IMR-90 (cell line): ENCODE measurements at regions of chr7 and their contacts with region 1.

Region 1: DNA sequence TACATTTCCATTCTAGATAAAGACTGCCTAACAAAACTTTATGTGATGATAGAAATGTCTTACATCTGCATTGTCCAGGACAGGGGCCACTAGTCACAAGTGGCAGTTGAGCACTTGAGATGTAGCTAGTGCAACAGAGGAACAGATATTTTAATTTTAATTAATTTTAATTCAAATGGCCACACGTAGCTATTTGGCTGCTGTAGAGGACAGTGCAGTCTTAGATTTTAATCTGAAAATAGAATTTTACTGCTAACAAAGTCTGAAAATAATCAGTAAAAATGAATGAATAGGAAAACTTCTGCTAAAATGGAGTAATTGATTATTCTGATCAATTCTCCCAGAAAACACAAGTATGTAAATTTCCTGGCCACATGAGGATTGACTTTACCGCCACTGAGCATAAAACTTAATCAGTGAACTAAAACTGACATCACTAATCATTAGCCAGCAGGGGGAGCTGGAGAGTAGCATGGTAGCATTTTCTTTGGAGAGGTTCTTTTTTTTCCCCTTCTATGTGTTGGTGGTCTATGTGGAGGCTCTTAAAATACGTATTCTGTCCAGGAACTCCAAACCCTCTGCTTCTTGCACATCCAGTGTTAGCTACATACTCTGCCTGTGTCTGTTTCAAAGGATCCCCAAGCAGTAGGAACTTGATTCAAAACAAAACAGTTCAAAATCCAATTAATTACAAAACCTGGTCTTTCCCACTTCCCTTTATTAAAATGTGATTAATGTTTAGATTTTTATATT is 52.1 kb downstream of the TSPAN12 start:
- DNase-seq: peak; percentile 61
- ATAC-seq: peak; percentile 85
- H3K4me3 ChIP-seq: no peak overlapping the region
- H3K27ac ChIP-seq: no peak overlapping the region
- H3K4me1 ChIP-seq: 0 out of 2 replicates have a peak, but pooled peaks cover 2% of the 10 kb centered on the region
- H3K27me3 ChIP-seq: no peaks in the 10 kb centered on the region
- CTCF ChIP-seq: peak; percentile 74
- POLR2A ChIP-seq: no peak
- RAD21 ChIP-seq: peak; percentile 70

Region 2: GRCh38 chr7:120760050-120760449 is 45.8 kb before region 1 on chr7:
- CTCF ChIA-PET with region 1: no interaction called
- POLR2A ChIA-PET with region 1: no interaction called
- dilution Hi-C with region 1: no loop called
- in situ Hi-C with region 1: no loop called
- intact Hi-C with region 1: no loop called
- DNase-seq: no peak
- ATAC-seq: no peak
- H3K4me3 ChIP-seq: no peak overlapping the region
- H3K27ac ChIP-seq: no peak overlapping the region
- H3K4me1 ChIP-seq: no peaks in the 10 kb centered on the region
- H3K27me3 ChIP-seq: peaks cover 1% of the 10 kb centered on the region; the same call in 1 of the 2 replicates
- CTCF ChIP-seq: no peak
- POLR2A ChIP-seq: no peak
- RAD21 ChIP-seq: no peak

Region 3: DNA sequence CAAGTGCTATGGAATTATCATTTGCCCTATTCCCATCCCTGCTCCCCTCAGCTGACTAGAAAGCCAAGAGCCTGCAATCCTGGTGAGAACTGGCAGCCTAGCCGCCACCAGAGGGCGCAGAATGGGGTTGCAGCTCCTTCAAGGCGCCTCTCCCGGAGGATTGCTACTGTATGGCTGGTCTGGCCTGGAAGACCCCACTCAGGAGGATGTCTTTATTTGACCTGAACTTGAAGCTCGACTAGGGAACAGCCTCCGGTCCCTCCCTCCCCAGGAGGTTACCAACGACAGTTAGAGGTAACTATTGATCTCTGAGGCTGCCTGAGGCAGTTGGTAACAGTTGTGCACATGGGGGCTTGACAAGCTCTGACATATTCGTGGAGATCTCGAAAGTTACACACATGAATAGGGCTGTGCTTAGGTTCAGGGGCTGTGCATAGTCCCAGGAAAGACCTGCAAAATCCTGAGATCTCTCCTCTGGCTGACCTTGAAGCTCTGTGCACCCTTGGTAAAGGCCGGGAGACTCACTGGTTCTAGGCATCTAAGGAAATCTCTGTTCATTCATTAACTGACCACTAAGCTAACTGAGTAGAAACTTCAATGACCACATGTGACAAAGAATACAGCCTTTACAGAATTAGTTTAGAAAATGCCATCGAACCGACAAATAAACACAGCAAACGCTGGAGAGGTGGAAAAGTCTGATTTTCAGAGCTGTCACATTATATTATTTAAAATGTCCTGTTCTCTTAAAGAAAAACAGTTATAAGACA is 13.5 kb before region 1 on chr7:
- CTCF ChIA-PET with region 1: interaction called, 14 read pairs
- POLR2A ChIA-PET with region 1: no interaction called
- dilution Hi-C with region 1: no loop called
- in situ Hi-C with region 1: no loop called
- intact Hi-C with region 1: no loop called
- DNase-seq: peak; percentile 65
- ATAC-seq: peak; percentile 96
- H3K4me3 ChIP-seq: no peak overlapping the region
- H3K27ac ChIP-seq: no peak overlapping the region
- H3K4me1 ChIP-seq: peaks cover 2% of the 10 kb centered on the region; the same call in 1 of the 2 replicates
- H3K27me3 ChIP-seq: no peaks in the 10 kb centered on the region
- CTCF ChIP-seq: peak; percentile 70
- POLR2A ChIP-seq: no peak
- RAD21 ChIP-seq: peak; percentile 59

Region 4: GRCh38 chr7:120927454-120928103 is 121.8 kb after region 1 on chr7:
- CTCF ChIA-PET with region 1: interaction called, 3 read pairs
- POLR2A ChIA-PET with region 1: no interaction called
- dilution Hi-C with region 1: no loop called
- in situ Hi-C with region 1: loop called (anchors 10 kb)
- intact Hi-C with region 1: no loop called
- DNase-seq: no peak
- ATAC-seq: no peak
- H3K4me3 ChIP-seq: no peak overlapping the region
- H3K27ac ChIP-seq: no peak overlapping the region
- H3K4me1 ChIP-seq: no peaks in the 10 kb centered on the region
- H3K27me3 ChIP-seq: no peaks in the 10 kb centered on the region
- CTCF ChIP-seq: no peak
- POLR2A ChIP-seq: no peak
- RAD21 ChIP-seq: no peak

Region 5: DNA sequence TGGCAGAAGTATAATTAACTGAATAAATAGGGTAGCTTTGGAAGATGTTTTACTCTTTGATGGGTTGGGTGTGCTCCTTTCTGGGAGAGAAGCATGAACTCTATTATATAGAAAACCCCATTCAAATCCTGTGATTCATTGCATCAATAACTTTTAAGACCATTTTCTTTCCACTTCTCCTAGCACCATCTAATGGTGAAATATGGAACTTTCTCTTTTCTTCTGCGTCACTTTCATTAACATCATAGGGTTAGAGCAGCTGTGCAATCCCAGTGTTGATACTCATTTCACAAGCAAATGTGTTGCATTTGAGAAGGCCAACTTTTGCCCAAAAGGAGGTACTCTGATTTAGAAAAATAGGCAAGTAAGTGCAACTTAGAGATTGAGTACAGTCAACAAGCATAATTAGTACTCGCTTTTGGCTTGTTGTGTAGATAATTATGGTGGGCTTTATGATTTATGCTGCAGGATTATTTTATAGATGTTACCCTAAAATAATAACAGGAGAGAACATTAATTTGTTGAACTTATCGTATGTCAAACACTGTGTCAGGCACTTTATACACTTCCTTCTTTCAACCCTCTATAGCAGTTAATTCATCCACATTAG is 275.6 kb after region 1 on chr7:
- CTCF ChIA-PET with region 1: no interaction called
- POLR2A ChIA-PET with region 1: no interaction called
- dilution Hi-C with region 1: no loop called
- in situ Hi-C with region 1: no loop called
- intact Hi-C with region 1: loop called (anchors 2 kb)
- DNase-seq: peak; percentile 85
- ATAC-seq: peak; percentile 19
- H3K4me3 ChIP-seq: no peak overlapping the region
- H3K27ac ChIP-seq: no peak overlapping the region
- H3K4me1 ChIP-seq: peaks cover 19% of the 10 kb centered on the region
- H3K27me3 ChIP-seq: no peaks in the 10 kb centered on the region
- CTCF ChIP-seq: peak; percentile 78
- POLR2A ChIP-seq: no peak
- RAD21 ChIP-seq: peak; percentile 78

Region 6: DNA sequence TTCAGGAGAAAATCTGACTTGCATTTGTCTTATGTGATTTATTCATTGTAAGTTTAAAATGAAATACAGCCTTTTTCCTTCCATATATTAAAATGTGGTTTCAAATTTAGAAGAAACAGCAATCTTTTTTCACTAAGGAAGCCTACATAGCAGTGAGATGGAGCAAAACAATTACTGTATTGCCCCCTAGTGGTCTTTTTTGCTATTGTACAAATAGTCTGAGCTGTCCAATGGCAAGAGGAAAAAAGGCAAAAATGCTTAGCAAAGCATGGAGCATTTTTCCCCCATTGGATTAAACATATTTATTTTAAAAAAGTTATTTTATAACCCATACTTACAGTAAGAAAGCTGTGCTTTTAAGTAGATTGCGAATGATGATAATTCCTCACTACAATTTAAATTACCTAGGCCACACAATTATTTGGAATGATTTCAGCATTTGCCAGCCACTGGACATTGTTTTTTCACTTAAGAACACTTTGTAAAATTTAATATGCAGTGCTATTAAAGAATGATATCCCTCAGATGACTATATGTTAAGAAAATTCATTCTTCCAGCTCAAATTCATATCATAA is 302.2 kb after region 1 on chr7:
- CTCF ChIA-PET with region 1: no interaction called
- POLR2A ChIA-PET with region 1: no interaction called
- dilution Hi-C with region 1: no loop called
- in situ Hi-C with region 1: loop called (anchors 5 kb)
- intact Hi-C with region 1: loop called (anchors 2 kb)
- DNase-seq: peak; percentile 78
- ATAC-seq: peak; percentile 92
- H3K4me3 ChIP-seq: no peak overlapping the region
- H3K27ac ChIP-seq: no peak overlapping the region
- H3K4me1 ChIP-seq: peaks cover 4% of the 10 kb centered on the region
- H3K27me3 ChIP-seq: no peaks in the 10 kb centered on the region
- CTCF ChIP-seq: peak; percentile 87
- POLR2A ChIP-seq: no peak
- RAD21 ChIP-seq: peak; percentile 83